Right cardiac atrium (tissue), 5 donors: ENCODE measurements at regions of chr15 and their contacts with region 1.

Region 1: GRCh38 chr15:39767921-39768320 is 14.7 kb downstream of the FSIP1 start:
- DNase-seq: no peak
- ATAC-seq: no peak
- H3K4me3 ChIP-seq: no peak overlapping the region
- H3K27ac ChIP-seq: no peak overlapping the region
- H3K4me1 ChIP-seq: no peaks in the 10 kb centered on the region
- H3K27me3 ChIP-seq: no peaks in the 10 kb centered on the region

Region 2: DNA sequence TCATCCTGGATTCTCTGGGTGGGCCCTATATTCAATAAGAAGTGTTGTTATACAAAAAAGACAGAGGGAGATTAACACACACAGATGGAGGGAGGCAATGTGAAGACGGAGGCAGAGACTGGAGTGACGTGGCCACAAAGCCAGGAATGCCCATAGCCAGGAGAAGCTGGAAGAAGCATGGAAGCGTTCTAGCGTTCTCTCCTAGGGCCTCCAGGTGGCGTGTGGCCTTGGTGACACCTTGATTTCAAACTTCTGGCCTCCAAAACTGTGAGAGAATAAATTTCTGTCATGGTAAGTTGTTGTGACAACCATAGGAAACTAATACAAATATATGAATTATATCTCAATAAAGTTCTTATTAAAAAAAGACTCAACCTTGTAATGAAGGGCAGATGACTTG is 165.8 kb before region 1 on chr15:
- intact Hi-C with region 1: loop called in 1 of 4 experiments (anchors 10 kb)
- DNase-seq: no peak
- ATAC-seq: no peak
- H3K4me3 ChIP-seq: no peak overlapping the region
- H3K27ac ChIP-seq: no peak overlapping the region
- H3K4me1 ChIP-seq: no peaks in the 10 kb centered on the region
- H3K27me3 ChIP-seq: no peaks in the 10 kb centered on the region